ENCODE measurements at regions of chr17 and their contacts with region 1.

Region 1: GRCh38 chr17:8138672-8139371 is 13.4 kb downstream of the PER1 start:
- DNase-seq: peak; percentile 95
- H3K4me3 ChIP-seq: peak overlapping the region; percentile 56
- H3K27ac ChIP-seq: peak overlapping the region; percentile 59
- H3K27me3 ChIP-seq: no peaks in the 10 kb centered on the region
- CTCF ChIP-seq: peak; percentile 89

Region 2: GRCh38 chr17:7394452-7395191 is 744.2 kb before region 1 on chr17 and contains the start of gene PLSCR3:
- CTCF ChIA-PET with region 1: no interaction called
- POLR2A ChIA-PET with region 1: no interaction called
- DNase-seq: peak; percentile 51
- H3K4me3 ChIP-seq: peak within 1 kb of the TSS; percentile 87
- H3K27ac ChIP-seq: peak within 1 kb of the TSS; percentile 93
- H3K27me3 ChIP-seq: no peaks in the 10 kb centered on the region
- CTCF ChIP-seq: peak; percentile 51
- polyA plus RNA-seq, gene PLSCR3: 35.2 and 53.0 TPM in 2 replicates

Region 3: GRCh38 chr17:8151123-8151640 is 12.4 kb after region 1 on chr17:
- CTCF ChIA-PET with region 1: interaction called, 7 read pairs
- POLR2A ChIA-PET with region 1: interaction called, 18 read pairs
- DNase-seq: peak; percentile 63
- H3K4me3 ChIP-seq: peak overlapping the region; percentile 92
- H3K27ac ChIP-seq: peak overlapping the region; percentile 95
- H3K27me3 ChIP-seq: no peaks in the 10 kb centered on the region
- CTCF ChIP-seq: no peak

Region 4: GRCh38 chr17:8156246-8156992 is 17.6 kb after region 1 on chr17:
- CTCF ChIA-PET with region 1: interaction called, 17 read pairs
- POLR2A ChIA-PET with region 1: interaction called, 18 read pairs
- DNase-seq: peak; percentile 100
- H3K4me3 ChIP-seq: peak overlapping the region; percentile 72
- H3K27ac ChIP-seq: peak overlapping the region; percentile 97
- H3K27me3 ChIP-seq: no peaks in the 10 kb centered on the region
- CTCF ChIP-seq: no peak

Region 5: DNA sequence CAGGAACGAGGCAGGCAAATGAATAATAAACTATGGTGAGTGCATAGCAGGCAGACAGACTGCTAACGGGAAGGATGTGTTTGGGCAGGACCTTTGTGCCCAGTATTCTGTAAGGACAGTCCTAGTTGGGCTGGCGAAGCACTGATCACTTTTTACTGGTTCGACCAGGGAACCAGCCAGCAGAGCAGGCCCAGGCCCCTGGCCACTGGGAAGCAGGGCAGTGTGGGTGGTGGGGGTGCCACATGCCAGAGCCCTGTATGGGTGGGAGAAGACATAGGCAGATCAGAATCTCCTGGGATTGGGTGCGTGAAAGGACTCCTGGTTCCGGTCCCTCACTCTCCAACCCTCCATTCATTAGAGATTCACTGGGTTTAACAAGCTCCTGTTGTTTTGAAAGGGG is 27.9 kb after region 1 on chr17:
- CTCF ChIA-PET with region 1: no interaction called
- POLR2A ChIA-PET with region 1: no interaction called
- DNase-seq: no peak
- H3K4me3 ChIP-seq: no peak overlapping the region
- H3K27ac ChIP-seq: no peak overlapping the region
- H3K27me3 ChIP-seq: no peaks in the 10 kb centered on the region
- CTCF ChIP-seq: no peak

Region 6: GRCh38 chr17:8832711-8833352 is 694.0 kb after region 1 on chr17:
- CTCF ChIA-PET with region 1: no interaction called
- POLR2A ChIA-PET with region 1: no interaction called
- DNase-seq: no peak
- H3K4me3 ChIP-seq: no peak overlapping the region
- H3K27ac ChIP-seq: no peak overlapping the region
- H3K27me3 ChIP-seq: no peaks in the 10 kb centered on the region
- CTCF ChIP-seq: peak; percentile 21

Measured in AG04450 (cell line).